ENCODE measurements at regions of chr9 and their contacts with region 1.

Region 1: DNA sequence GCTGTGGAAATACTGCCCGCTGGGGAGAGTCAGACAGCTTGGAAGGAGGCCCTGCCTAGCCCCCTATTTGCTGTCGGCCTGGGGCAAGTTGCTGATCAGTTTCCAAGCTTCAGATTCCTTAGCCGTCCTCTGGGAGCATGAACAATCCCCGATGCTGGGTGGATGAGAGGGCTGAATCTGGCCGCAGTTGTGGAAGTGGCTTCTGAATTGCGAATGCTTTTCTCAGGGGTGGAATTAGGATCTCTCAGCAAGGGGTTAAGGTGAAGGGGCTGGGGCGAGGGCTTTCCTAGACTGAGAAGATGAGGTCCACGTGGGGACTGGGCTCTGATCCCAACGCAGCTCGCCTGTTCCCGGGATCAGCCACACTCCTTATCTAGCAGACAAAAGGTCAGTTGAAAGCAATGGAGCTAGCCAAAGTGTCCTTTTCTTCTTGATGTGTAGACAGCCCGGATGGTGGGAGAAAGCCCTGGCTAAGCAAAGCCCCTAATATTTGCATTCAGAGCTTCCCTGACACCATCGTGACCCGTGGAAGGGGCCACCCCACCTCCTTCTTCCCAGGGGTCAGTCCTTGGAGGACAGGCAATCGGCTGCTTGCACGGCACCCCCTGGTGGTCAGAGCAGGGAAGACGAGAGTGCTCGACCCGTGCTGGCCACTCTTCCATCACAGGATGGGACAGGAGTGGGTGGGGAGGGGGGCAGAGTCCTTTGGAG is 54.9 kb downstream of the COL15A1 start:
- DNase-seq: peak; percentile 70
- ATAC-seq: peak; percentile 74
- H3K4me3 Mint-ChIP-seq: no peak overlapping the region
- H3K27ac Mint-ChIP-seq: no peak overlapping the region
- H3K4me1 Mint-ChIP-seq: peaks cover 33% of the 10 kb centered on the region
- H3K27me3 Mint-ChIP-seq: peaks cover 26% of the 10 kb centered on the region

Region 2: GRCh38 chr9:98848450-98849149 is 150.0 kb before region 1 on chr9:
- CTCF ChIA-PET with region 1: interaction called, 52 read pairs
- DNase-seq: peak; percentile 86
- ATAC-seq: peak; percentile 94
- H3K4me3 Mint-ChIP-seq: no peak overlapping the region
- H3K27ac Mint-ChIP-seq: no peak overlapping the region
- H3K4me1 Mint-ChIP-seq: peaks cover 15% of the 10 kb centered on the region
- H3K27me3 Mint-ChIP-seq: no peaks in the 10 kb centered on the region

Region 3: DNA sequence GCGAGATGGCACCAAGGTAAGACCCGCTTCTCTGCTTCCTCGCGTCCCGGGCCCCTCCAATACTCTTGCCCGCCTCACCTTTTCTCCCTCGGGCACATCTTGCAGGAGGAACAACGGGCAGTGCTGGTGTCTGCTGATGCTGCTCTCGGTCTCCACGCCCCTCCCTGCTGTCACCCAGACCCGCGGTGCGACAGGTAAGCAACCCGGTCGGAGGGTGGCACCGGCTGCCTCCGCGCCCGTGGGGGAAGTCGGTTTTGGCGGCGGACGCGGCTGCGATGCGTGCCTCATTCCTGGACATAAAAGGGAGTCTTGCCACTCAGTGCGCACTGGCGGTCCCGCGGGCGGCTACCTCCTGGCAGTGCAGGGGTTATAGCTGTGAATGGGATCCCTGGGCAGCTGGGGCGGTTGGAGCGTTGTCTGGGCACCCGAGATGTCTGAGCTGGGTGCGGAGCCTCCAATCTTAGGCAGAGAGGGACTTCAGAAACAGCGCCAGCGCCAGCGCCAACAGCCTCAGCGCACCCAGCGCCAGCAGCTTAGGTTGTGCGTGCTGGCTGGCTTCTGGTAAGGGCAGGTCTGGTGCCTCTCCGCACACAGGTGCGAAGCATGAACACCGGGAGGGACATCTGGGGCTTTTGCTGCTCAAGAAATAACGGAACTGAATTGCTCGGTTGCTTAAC is 54.4 kb before region 1 on chr9:
- CTCF ChIA-PET with region 1: no interaction called
- DNase-seq: no peak
- ATAC-seq: no peak
- H3K4me3 Mint-ChIP-seq: peak overlapping the region; percentile 44
- H3K27ac Mint-ChIP-seq: no peak overlapping the region
- H3K4me1 Mint-ChIP-seq: peaks cover 14% of the 10 kb centered on the region
- H3K27me3 Mint-ChIP-seq: peaks cover 91% of the 10 kb centered on the region

Region 4: DNA sequence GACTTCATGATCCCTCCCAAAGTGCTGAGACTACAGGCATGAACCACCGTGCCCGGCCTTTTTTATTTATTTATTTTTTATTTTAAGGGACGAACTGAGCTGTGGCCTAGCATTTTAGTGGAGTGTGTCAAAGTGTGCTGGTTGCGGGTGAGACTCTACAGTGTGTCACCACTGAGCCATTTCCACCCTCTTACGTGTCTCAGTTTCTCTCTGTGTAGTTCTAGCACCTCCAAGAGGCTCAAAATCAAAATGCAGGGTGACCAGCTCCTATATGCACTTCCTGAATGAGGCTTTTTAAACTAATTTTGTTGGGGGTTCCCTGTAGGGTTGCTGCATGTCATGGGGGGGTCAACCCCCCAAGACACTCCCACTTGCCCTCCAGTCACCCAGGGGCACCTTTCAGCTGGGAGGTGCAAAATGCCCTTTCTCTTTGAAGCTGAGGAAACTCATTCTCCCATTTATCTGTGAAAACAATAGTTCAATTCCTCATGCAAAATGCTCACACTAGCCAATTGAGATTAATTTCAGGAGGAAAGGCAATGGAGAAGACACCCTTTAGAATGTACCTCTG is 14.4 kb after region 1 on chr9:
- CTCF ChIA-PET with region 1: interaction called, 35 read pairs
- DNase-seq: no peak
- ATAC-seq: peak; percentile 46
- H3K4me3 Mint-ChIP-seq: peak overlapping the region; percentile 58
- H3K27ac Mint-ChIP-seq: peak overlapping the region; percentile 98
- H3K4me1 Mint-ChIP-seq: peaks cover 21% of the 10 kb centered on the region
- H3K27me3 Mint-ChIP-seq: no peaks in the 10 kb centered on the region

Region 5: DNA sequence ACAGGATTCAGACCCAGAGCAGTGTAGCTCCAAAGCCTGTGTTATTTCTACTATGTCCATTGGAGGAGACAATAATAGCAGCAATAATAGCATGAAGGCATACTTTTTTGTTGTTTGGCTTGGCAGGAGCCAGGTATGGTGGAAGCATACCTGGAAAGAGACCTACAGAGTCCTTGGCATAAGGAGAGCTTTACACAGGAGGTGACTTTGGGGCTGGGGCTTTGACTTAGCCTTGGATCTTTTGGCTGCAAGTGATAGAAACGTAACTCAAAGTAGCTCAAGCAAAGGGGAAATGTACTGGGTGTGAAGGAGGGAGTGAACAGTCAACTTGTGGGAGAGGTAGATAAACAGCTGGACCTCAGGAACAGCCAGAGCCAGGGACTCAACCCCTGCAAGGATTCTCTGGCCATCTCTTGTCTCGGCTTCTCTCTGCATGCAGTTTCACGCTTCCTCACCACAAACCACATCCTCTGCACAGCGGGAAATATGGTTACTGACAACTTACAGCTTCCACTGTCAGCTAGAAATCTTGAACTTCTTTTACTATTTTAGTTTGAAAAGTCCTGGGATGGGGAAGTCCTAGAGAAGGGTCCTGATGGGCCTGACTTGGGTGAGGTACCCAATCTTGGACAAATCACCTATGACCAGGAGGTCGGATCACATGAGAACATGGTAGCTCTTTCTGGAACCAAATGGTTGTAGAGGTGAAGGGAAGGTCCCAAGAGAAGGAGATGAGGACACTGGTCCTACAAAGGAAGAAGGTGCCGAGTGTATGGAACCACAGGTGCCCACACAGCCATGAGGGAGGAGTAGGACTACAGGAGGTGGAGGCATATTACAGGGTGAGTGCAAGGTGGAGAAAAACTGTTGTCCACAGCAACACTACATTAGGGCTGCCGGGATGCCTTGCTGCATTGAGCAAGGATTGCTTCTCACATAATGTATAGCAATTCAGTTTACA is 59.3 kb after region 1 on chr9:
- CTCF ChIA-PET with region 1: interaction called, 14 read pairs
- DNase-seq: peak; percentile 97
- ATAC-seq: peak; percentile 65
- H3K4me3 Mint-ChIP-seq: peak overlapping the region; percentile 73
- H3K27ac Mint-ChIP-seq: peak overlapping the region; percentile 92
- H3K4me1 Mint-ChIP-seq: peaks cover 73% of the 10 kb centered on the region
- H3K27me3 Mint-ChIP-seq: no peaks in the 10 kb centered on the region

Region 6: DNA sequence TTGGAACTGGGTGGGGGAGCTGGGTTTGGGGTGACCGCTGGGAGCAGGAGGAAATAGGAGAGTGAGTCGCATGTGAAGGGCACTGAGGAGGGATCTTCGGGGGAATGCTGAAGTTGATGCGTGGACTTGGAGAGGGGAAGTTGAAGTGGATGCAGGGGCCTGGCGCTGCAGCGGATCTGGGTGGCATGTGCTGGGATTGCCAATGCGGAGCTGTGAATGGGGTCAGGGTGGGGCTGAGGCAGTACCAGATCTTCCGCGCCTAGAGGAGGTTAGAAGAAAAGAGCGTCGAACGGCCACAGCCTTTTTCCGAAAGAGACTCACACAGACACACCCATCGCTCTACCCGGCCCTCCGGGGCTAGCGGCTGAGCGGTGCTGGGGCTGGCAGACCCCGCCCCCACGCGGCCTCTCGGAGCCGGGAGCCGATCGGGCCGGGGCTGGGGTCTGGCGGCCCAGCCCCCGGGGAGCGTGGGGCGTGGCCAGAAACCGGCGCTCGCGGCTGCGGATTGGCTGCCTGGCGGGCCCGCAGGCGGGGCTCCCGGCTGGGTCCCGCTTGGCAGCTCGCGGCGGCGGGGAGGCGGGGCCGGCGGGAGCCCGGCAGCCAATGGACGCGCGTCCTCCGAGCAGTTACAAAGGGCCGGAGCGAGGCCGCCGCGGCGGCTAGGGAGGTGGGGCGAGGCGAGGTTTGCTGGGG is 106.0 kb after region 1 on chr9 and contains the start of gene TGFBR1:
- CTCF ChIA-PET with region 1: interaction called, 18 read pairs
- DNase-seq: peak; percentile 95
- ATAC-seq: peak; percentile 88
- H3K4me3 Mint-ChIP-seq: peak within 1 kb of the TSS; percentile 92
- H3K27ac Mint-ChIP-seq: peak within 1 kb of the TSS; percentile 88
- H3K4me1 Mint-ChIP-seq: peaks cover 68% of the 10 kb centered on the region
- H3K27me3 Mint-ChIP-seq: no peaks in the 10 kb centered on the region
- total RNA-seq, gene TGFBR1: 72.5 to 78.0 TPM

Region 7: DNA sequence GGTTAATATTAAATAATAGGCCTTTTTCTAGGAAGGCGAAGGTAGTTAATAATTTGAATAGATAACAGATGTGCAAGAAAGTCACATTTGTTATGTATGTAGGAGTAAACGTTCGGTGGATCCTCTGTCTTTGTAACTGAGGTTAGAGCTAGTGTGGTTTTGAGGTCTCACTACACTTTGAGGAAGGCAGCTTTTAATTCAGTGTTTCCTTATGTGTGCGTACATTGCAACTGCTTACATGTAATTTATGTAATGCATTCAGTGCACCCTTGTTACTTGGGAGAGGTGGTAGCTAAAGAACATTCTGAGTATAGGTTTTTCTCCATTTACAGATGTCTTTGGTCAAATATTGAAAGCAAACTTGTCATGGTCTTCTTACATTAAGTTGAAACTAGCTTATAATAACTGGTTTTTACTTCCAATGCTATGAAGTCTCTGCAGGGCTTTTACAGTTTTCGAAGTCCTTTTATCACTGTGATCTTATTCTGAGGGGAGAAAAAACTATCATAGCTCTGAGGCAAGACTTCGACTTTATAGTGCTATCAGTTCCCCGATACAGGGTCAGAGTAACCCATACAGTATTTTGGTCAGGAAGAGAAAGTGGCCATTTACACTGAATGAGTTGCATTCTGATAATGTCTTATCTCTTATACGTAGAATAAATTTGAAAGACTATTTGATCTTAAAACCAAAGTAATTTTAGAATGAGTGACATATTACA is 152.0 kb after region 1 on chr9:
- CTCF ChIA-PET with region 1: interaction called, 37 read pairs
- DNase-seq: no peak
- ATAC-seq: peak; percentile 84
- H3K4me3 Mint-ChIP-seq: no peak overlapping the region
- H3K27ac Mint-ChIP-seq: peak overlapping the region; percentile 0
- H3K4me1 Mint-ChIP-seq: peaks cover 37% of the 10 kb centered on the region
- H3K27me3 Mint-ChIP-seq: peaks cover 5% of the 10 kb centered on the region

Measured in activated CD8-positive, alpha-beta memory T cell treated with anti-CD3 and anti-CD28 coated beads, Interleukin-2, amount 10 ng/mL, durations not matched to agents 7 days and 5 days (primary cell).